ENCODE measurements at regions of chr6 and their contacts with region 1.

Region 1: DNA sequence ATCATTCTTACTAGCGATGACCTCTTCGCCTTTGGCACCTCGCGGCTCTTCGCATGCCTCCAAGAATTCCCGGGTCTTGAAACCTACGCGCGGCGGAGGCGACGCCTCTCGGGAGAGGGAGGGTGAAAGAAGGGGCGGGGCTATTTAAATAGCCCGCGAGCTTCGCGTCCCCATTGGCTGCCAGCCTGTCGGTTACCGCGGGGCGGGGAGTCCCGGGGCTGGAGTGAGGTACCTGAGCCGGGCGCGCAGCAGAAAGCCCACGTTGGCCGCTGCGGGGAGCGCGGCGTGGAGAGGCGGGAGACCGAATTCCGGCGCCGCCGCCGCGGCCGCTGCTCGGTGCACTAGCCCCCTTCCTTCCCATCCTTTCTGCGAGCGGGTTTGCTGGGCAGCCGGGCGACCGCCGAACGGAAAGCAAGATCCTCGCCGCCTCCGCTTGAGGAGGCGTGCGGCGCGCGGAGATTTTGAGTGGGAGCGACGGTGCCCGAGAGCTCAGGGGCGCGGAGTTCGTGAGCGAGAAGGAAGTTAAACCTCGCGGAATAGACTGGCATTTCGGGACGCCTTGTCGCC is at the start of gene BMP6:
- DNase-seq: peak; percentile 50 to 86
- H3K4me3 ChIP-seq: peak within 1 kb of the TSS; percentile 54 to 90
- H3K27ac ChIP-seq: no peak within 1 kb of the TSS
- H3K4me1 ChIP-seq: peaks cover 20 to 21% of the 10 kb centered on the region in 2 donors
- H3K27me3 ChIP-seq: peaks cover 11% of the 10 kb centered on the region
- CTCF ChIP-seq: no peak
- total RNA-seq, gene BMP6: 16.0 TPM

Region 2: GRCh38 chr6:8006208-8006607 is 280.3 kb after region 1 on chr6:
- intact Hi-C with region 1: loop called (anchors 5 kb)
- DNase-seq: no peak
- H3K4me3 ChIP-seq: no peak overlapping the region
- H3K27ac ChIP-seq: no peak overlapping the region
- H3K4me1 ChIP-seq: no peaks in the 10 kb centered on the region
- H3K27me3 ChIP-seq: no peaks in the 10 kb centered on the region
- CTCF ChIP-seq: peak in 2 of 3 experiments; percentile 26 to 41

Region 3: GRCh38 chr6:8219352-8219943 is 493.5 kb after region 1 on chr6:
- intact Hi-C with region 1: loop called (anchors 10 kb)
- DNase-seq: peak in 1 of 2 donors; percentile 70
- H3K4me3 ChIP-seq: peak overlapping the region in 1 of 2 donors; percentile 18
- H3K27ac ChIP-seq: no peak overlapping the region
- H3K4me1 ChIP-seq: peaks cover 0 to 2% of the 10 kb centered on the region in 2 donors
- H3K27me3 ChIP-seq: no peaks in the 10 kb centered on the region
- CTCF ChIP-seq: peak; percentile 34 to 76 (median 67)